ENCODE measurements at regions of chr1 and their contacts with region 1.

Region 1: GRCh38 chr1:100265931-100266740 is at the start of gene RTCA:
- DNase-seq: peak; percentile 96
- H3K4me3 Mint-ChIP-seq: peak within 1 kb of the TSS; percentile 98
- H3K27ac Mint-ChIP-seq: peak within 1 kb of the TSS; percentile 93
- H3K4me1 Mint-ChIP-seq: peaks cover 45% of the 10 kb centered on the region
- H3K27me3 Mint-ChIP-seq: peaks cover 3% of the 10 kb centered on the region
- total RNA-seq, gene RTCA: 67.5 to 68.2 TPM

Region 2: DNA sequence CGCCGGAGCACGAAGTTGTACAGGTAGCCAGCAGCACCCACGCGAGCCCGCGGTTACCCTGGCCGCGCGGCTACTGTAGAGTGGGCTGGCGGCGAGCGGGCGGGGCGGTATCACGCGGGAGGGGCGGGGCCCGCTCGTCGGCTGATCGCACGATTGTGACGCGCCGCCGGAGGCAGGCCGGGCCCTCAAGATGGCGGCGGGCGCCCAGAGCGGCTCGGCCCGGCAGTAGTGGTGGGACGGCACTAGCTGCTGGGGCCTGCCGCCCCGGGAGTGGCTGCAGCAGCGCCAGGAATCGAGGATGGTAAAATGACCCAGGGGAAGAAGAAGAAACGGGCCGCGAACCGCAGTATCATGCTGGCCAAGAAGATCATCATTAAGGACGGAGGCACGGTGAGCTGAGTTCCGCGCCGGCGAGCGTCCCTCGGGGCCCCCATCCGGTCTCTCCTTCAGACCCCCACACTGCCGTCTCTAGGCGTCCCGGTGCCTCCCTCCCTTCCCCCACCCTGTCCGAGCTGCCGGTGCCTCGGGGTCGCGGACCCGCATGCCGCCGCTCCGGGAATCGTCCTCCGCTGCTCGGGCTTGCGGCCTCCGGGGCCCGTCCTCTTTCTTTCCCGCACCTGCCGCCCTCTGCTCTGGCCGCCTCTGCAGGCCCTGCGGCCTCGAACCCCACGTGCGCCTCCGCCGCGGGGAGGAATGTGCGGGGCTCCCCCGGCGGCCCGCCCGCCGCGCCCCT is 228.0 kb before region 1 on chr1:
- CTCF ChIA-PET with region 1: interaction called, 4 read pairs
- POLR2A ChIA-PET with region 1: interaction called, 29 read pairs
- DNase-seq: peak; percentile 91
- H3K4me3 Mint-ChIP-seq: peak overlapping the region; percentile 90
- H3K27ac Mint-ChIP-seq: peak overlapping the region; percentile 99
- H3K4me1 Mint-ChIP-seq: peaks cover 61% of the 10 kb centered on the region
- H3K27me3 Mint-ChIP-seq: no peaks in the 10 kb centered on the region

Region 3: DNA sequence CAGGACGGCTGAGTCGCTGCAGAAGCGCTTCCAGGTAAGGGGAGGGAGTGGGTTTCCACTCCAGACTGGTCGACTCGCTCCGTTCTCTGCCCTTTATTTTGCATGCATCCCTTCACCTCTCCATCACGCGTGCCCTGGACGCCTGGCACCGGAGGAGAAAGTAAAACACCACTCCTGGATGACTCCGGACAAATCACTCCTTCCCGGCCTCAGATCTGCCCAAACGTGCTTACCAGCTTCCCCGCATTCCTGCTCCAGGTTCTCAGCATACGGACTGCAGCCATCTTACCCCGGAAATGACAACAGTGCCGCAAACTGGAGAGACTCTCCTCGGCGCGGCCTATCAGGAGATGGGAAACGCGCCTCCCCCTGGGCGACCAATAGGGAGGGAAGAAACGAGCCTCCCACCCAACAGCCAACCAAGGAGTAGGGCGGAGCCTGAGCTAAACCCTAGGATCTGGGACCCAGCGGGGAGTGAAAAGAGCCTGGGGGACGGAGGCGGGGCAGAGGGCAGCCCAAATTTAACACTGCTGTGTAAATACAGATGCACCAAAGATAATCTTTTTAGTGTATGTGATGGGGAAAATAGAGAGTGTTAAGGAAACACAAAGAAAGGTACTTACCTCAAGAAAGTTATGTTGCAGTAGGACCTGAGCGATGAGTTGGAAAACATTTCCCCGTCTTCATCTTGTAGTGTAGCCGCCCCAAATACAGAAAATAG is 16.4 kb before region 1 on chr1 and contains the start of gene DBT:
- CTCF ChIA-PET with region 1: interaction called, 7 read pairs
- POLR2A ChIA-PET with region 1: interaction called, 96 read pairs
- DNase-seq: peak; percentile 94
- H3K4me3 Mint-ChIP-seq: peak within 1 kb of the TSS; percentile 19
- H3K27ac Mint-ChIP-seq: no peak within 1 kb of the TSS
- H3K4me1 Mint-ChIP-seq: peaks cover 15% of the 10 kb centered on the region
- H3K27me3 Mint-ChIP-seq: no peaks in the 10 kb centered on the region
- total RNA-seq, gene DBT: 12.1 to 12.9 TPM

Region 4: GRCh38 chr1:100299521-100300222 is 33.5 kb after region 1 on chr1:
- CTCF ChIA-PET with region 1: no interaction called
- POLR2A ChIA-PET with region 1: interaction called, 18 read pairs
- DNase-seq: no peak
- H3K4me3 Mint-ChIP-seq: no peak overlapping the region
- H3K27ac Mint-ChIP-seq: no peak overlapping the region
- H3K4me1 Mint-ChIP-seq: peaks cover 17% of the 10 kb centered on the region
- H3K27me3 Mint-ChIP-seq: no peaks in the 10 kb centered on the region

Region 5: GRCh38 chr1:100423832-100424337 is 157.7 kb after region 1 on chr1:
- CTCF ChIA-PET with region 1: no interaction called
- POLR2A ChIA-PET with region 1: interaction called, 12 read pairs
- DNase-seq: peak; percentile 39
- H3K4me3 Mint-ChIP-seq: peak overlapping the region; percentile 56
- H3K27ac Mint-ChIP-seq: peak overlapping the region; percentile 90
- H3K4me1 Mint-ChIP-seq: peaks cover 60% of the 10 kb centered on the region
- H3K27me3 Mint-ChIP-seq: no peaks in the 10 kb centered on the region

Region 6: GRCh38 chr1:100452641-100453040 is 186.5 kb after region 1 on chr1:
- CTCF ChIA-PET with region 1: interaction called, 10 read pairs
- POLR2A ChIA-PET with region 1: interaction called, 20 read pairs
- DNase-seq: no peak
- H3K4me3 Mint-ChIP-seq: no peak overlapping the region
- H3K27ac Mint-ChIP-seq: peak overlapping the region; percentile 85
- H3K4me1 Mint-ChIP-seq: peaks cover 86% of the 10 kb centered on the region
- H3K27me3 Mint-ChIP-seq: no peaks in the 10 kb centered on the region

Measured in activated CD4-positive, alpha-beta memory T cell treated with anti-CD3 and anti-CD28 coated beads, Interleukin-2, amount 10 ng/mL, durations not matched to agents 7 days and 5 days (primary cell).